IMR-90 (cell line): ENCODE measurements at regions of chr1 and their contacts with region 1.

Region 1: GRCh38 chr1:182861994-182862393 is 22.8 kb downstream of the DHX9 start:
- DNase-seq: peak; percentile 88
- ATAC-seq: peak; percentile 60
- H3K4me3 ChIP-seq: no peak overlapping the region
- H3K27ac ChIP-seq: no peak overlapping the region
- H3K4me1 ChIP-seq: peaks cover 4% of the 10 kb centered on the region; the same call in 1 of the 2 replicates
- H3K27me3 ChIP-seq: no peaks in the 10 kb centered on the region
- CTCF ChIP-seq: no peak
- POLR2A ChIP-seq: no peak
- RAD21 ChIP-seq: no peak

Region 2: GRCh38 chr1:183116416-183116815 is 254.4 kb after region 1 on chr1:
- CTCF ChIA-PET with region 1: no interaction called
- POLR2A ChIA-PET with region 1: no interaction called
- dilution Hi-C with region 1: no loop called
- in situ Hi-C with region 1: no loop called
- intact Hi-C with region 1: loop called (anchors 5 kb)
- DNase-seq: no peak
- ATAC-seq: no peak
- H3K4me3 ChIP-seq: no peak overlapping the region
- H3K27ac ChIP-seq: no peak overlapping the region
- H3K4me1 ChIP-seq: no peaks in the 10 kb centered on the region
- H3K27me3 ChIP-seq: no peaks in the 10 kb centered on the region
- CTCF ChIP-seq: no peak
- POLR2A ChIP-seq: no peak
- RAD21 ChIP-seq: no peak